ENCODE measurements at regions of chr20 and their contacts with region 1.

Region 1: GRCh38 chr20:2523919-2524708 is 12.3 kb upstream of the TMC2 start:
- DNase-seq: peak; percentile 42 to 93
- H3K4me3 ChIP-seq: peak overlapping the region; percentile 84 to 94
- H3K27ac ChIP-seq: peak overlapping the region; percentile 92 to 94
- H3K4me1 ChIP-seq: peaks cover 0 to 3% of the 10 kb centered on the region in 2 donors
- H3K27me3 ChIP-seq: no peaks in the 10 kb centered on the region
- CTCF ChIP-seq: peak; percentile 90 to 99 (median 98)

Region 2: GRCh38 chr20:1118336-1119127 is 1405.6 kb before region 1 on chr20 and contains the start of gene PSMF1:
- intact Hi-C with region 1: loop called (anchors 10 kb)
- DNase-seq: peak; percentile 77 to 96
- H3K4me3 ChIP-seq: peak within 1 kb of the TSS; percentile 99
- H3K27ac ChIP-seq: peak within 1 kb of the TSS; percentile 74 to 80
- H3K4me1 ChIP-seq: peaks cover 8 to 44% of the 10 kb centered on the region in 2 donors
- H3K27me3 ChIP-seq: no peaks in the 10 kb centered on the region
- CTCF ChIP-seq: peak; percentile 3 to 28 (median 10)
- total RNA-seq, gene PSMF1: 46.8 TPM

Region 3: DNA sequence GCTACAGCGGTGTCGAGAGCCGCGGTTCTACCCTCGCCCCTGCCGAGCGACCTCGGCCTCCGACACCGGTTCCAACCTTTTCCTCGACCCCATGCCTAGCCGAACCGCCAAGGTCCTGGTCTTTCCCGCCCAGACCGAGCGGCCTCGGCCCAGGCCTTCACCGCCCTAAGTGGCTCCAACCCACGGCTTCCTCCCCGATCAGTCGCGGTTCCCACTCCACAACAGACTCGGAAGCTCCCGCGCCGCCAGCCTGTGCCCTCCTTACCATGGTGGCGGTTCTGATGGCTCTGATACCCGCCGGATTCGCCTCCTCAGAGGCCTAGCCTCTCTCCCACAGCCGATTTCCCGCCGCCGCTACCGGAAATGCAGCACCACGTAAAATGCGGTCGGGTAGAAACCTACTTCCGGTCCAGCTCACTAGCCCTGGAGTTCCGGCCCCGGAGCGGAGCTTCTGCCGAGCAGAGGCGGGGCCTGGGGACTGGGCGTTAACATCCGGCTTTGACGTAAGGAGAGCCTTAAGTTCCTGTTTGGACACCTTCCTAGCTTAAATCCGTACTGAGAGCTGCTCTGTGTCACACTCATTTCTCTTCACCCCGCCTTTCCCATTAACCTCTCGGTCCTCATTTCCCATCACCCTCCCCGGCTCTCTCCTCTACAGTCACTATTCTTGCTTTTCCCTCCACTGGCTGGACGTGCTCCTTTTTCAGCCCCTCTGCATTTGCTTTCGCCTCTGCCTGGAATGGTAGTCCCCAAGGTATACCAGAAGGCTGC is 53.5 kb before region 1 on chr20 and contains the start of gene SNRPB:
- intact Hi-C with region 1: loop called (anchors 1 kb)
- DNase-seq: peak; percentile 88 to 99
- H3K4me3 ChIP-seq: peak within 1 kb of the TSS; percentile 76 to 81
- H3K27ac ChIP-seq: peak within 1 kb of the TSS; percentile 94 to 96
- H3K4me1 ChIP-seq: peaks cover 4 to 18% of the 10 kb centered on the region in 2 donors
- H3K27me3 ChIP-seq: no peaks in the 10 kb centered on the region
- CTCF ChIP-seq: no peak
- total RNA-seq, gene SNRPB: 83.5 TPM

Region 4: DNA sequence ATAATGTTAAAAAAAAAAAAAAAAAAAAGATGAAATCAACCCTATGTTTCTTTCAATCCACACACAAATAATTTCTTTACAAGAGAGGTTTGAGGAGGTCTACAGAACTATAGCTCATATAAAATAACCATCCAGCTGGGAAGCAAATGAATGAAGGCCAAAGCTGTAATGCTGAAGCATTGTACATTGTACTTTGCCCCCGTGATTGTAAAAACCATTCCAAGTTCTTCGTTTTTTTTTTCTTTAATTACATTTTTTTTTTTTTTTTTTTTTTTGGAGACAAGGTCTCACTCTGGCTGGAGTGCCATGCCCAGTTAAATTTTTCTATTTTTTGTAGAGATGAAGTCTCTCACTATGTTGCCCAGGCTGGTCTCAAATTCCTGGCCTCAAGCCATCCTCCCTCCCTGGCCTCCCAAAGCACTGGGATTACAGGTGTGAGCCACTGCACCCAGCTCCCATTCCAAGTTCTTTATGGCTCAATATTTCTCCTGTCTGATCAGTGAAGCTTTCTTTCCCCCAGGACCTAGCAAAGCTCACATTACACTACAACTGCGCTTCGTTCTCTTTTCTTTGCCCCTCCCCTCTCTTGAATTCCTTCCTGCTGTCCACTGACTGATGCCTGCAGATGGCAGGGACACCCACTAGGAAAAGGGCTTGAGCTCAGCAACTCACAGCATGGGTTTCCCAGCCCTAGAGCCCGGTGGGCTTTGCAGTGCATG is 75.3 kb after region 1 on chr20:
- intact Hi-C with region 1: no loop called
- DNase-seq: no peak
- H3K4me3 ChIP-seq: no peak overlapping the region
- H3K27ac ChIP-seq: no peak overlapping the region
- H3K4me1 ChIP-seq: no peaks in the 10 kb centered on the region
- H3K27me3 ChIP-seq: no peaks in the 10 kb centered on the region
- CTCF ChIP-seq: no peak

Region 5: GRCh38 chr20:2631228-2631627 is 107.1 kb after region 1 on chr20:
- intact Hi-C with region 1: no loop called
- DNase-seq: no peak
- H3K4me3 ChIP-seq: no peak overlapping the region
- H3K27ac ChIP-seq: no peak overlapping the region
- H3K4me1 ChIP-seq: no peaks in the 10 kb centered on the region
- H3K27me3 ChIP-seq: no peaks in the 10 kb centered on the region
- CTCF ChIP-seq: no peak

Region 6: GRCh38 chr20:2651772-2652723 is 127.9 kb after region 1 on chr20 and contains the start of gene NOP56:
- intact Hi-C with region 1: loop called (anchors 2 kb)
- DNase-seq: peak; percentile 48 to 94
- H3K4me3 ChIP-seq: peak within 1 kb of the TSS; percentile 69 to 87
- H3K27ac ChIP-seq: peak within 1 kb of the TSS; percentile 81 to 82
- H3K4me1 ChIP-seq: peaks cover 9 to 15% of the 10 kb centered on the region in 2 donors
- H3K27me3 ChIP-seq: no peaks in the 10 kb centered on the region
- CTCF ChIP-seq: no peak
- total RNA-seq, gene NOP56: 32.1 TPM

Region 7: DNA sequence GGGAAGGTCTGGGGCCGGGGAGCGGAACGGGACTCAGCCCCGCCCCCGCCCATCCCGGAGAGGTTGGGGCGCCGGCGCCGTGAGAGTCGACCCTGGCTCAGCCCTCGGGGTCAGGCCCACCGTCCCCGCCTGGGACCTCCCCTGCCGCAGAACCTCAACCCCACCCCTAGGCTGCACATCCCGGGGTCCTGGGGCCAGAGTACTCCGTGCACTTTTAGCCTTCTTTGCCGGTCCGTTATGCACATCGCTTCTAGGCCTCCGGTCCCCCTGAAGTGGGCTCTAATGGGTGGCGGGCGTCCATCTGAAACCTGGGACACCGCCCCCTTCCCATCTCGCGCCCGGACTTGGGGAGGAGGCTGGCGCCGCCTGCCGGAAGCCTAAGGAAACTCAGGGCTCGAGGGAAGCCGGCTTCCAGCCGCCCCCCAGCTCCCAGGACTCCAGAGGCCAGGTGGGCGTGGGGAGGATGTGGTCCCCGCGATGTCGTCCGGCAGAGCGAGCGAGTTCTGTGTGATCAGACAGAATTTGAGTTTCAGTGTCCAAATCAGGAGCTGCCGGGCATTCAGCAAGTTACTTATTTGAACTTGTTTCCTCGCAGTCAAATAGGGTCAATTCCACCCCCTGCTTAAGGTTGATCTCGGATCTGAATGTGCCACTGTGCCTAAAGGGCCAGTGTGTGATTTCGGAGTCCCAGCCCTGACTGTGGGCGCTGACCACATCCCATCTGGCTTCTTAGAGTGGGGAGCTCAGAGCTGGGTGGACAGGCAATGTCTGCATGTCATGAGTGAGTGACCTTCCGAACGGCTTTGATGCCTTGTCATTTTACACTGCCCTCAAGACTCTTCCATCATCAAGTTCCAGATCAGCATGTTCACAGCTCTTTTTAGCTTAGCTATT is 228.7 kb after region 1 on chr20:
- intact Hi-C with region 1: loop called (anchors 5 kb)
- DNase-seq: peak in 1 of 2 donors; percentile 65
- H3K4me3 ChIP-seq: peak overlapping the region; percentile 62
- H3K27ac ChIP-seq: no peak overlapping the region
- H3K4me1 ChIP-seq: peaks cover 13 to 14% of the 10 kb centered on the region in 2 donors
- H3K27me3 ChIP-seq: peaks cover 3% of the 10 kb centered on the region
- CTCF ChIP-seq: peak; percentile 27 to 60 (median 50)

Region 8: DNA sequence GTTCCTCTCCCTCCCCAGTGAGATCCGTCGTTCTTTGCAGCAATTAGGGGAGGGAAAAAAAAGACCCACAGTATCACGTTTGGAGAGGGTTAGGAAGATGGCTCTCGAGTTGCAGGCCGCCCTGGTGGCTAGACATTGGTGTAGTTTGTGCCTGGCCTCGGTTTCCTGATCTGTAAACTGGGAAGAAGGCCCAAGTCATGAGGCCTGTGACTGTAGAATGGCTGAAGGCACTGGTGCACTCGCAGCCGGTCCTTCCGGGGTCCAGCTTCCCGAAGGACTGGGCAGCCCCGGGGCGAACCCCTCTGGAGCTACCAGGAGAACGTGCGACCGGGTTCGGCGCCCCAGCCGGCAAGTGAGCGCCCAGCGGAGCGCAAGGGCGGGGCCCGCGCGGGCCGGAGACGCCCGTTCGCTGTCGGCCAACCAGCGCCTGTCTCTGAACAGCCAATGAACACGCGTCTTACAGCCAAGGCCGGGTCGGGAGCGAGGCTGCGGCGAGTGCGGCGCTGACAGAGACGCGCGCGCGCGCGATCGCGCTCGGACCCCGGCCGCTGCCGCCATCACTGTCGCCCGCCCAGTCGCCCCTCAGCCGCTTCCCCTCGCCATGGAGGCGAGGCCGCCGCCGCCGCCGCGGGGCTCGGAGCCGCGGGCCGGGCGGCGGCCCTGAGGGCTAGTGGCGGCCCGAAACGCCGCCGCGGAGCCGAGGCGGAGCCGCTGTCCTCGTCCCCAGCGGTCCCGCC is 349.1 kb after region 1 on chr20 and contains the start of gene PTPRA:
- intact Hi-C with region 1: loop called (anchors 5 kb)
- DNase-seq: peak; percentile 71 to 94
- H3K4me3 ChIP-seq: peak within 1 kb of the TSS; percentile 81 to 96
- H3K27ac ChIP-seq: peak within 1 kb of the TSS; percentile 62 to 66
- H3K4me1 ChIP-seq: peaks cover 4 to 8% of the 10 kb centered on the region in 2 donors
- H3K27me3 ChIP-seq: no peaks in the 10 kb centered on the region
- CTCF ChIP-seq: no peak
- total RNA-seq, gene PTPRA: 24.2 TPM

Region 9: GRCh38 chr20:3173610-3174441 is 649.7 kb after region 1 on chr20:
- intact Hi-C with region 1: loop called (anchors 10 kb)
- DNase-seq: peak in 1 of 2 donors; percentile 93
- H3K4me3 ChIP-seq: peak overlapping the region; percentile 85 to 88
- H3K27ac ChIP-seq: peak overlapping the region; percentile 77 to 78
- H3K4me1 ChIP-seq: peaks cover 0 to 4% of the 10 kb centered on the region in 2 donors
- H3K27me3 ChIP-seq: no peaks in the 10 kb centered on the region
- CTCF ChIP-seq: peak; percentile 15 to 24 (median 23)